Adrenal gland (tissue), 19 donors: ENCODE measurements at regions of chr13 and their contacts with region 1.

Region 1: GRCh38 chr13:44465318-44465717 is 91.7 kb downstream of the SERP2 start:
- DNase-seq: no peak
- H3K4me3 ChIP-seq: no peak overlapping the region
- H3K27ac ChIP-seq: no peak overlapping the region
- H3K4me1 ChIP-seq: no peaks in the 10 kb centered on the region
- H3K27me3 ChIP-seq: no peaks in the 10 kb centered on the region
- CTCF ChIP-seq: no peak
- POLR2A ChIP-seq: no peak

Region 2: DNA sequence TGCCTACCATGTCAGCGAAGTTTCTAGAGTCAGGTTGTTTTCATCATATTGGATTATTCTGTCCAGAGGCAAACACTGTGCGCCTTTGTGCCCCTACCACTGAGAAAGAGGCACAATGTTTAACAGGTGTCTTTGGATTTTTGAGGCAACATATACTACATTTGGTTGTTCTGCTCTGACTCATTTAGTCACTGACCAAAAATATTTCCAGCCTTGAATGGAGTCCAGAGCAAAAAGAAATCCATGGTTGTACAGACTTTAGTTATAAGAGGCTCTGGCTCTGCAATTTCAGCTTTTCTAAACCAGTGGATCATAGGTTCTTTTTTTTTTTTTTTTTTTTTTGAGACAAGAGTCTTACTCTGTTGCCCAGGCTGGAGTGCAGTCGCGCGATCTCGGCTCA is 549.9 kb before region 1 on chr13:
- intact Hi-C with region 1: loop called in 1 of 2 experiments (anchors 10 kb)
- DNase-seq: no peak
- H3K4me3 ChIP-seq: no peak overlapping the region
- H3K27ac ChIP-seq: no peak overlapping the region
- H3K4me1 ChIP-seq: no peaks in the 10 kb centered on the region
- H3K27me3 ChIP-seq: no peaks in the 10 kb centered on the region
- CTCF ChIP-seq: no peak
- POLR2A ChIP-seq: no peak

Region 3: DNA sequence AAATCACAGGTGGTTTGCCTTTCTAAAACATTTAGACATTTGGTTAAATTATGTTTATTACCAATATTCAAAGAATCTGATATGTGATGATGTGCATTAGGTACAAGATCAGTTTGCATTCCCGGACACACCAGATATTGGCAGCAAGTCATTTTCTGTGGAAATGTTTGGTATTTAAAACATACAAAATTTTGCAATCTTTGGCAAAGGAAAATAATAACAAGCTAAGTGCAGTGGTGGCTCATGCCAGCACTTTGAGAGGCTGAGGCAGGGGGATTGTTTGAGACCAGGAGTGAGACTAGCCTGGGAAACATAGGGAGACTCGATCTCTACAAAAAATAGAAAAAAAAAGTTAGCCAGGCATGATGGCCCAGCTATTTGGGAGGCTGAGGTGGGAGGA is 140.0 kb after region 1 on chr13:
- intact Hi-C with region 1: no loop called
- DNase-seq: no peak
- H3K4me3 ChIP-seq: no peak overlapping the region
- H3K27ac ChIP-seq: no peak overlapping the region
- H3K4me1 ChIP-seq: no peaks in the 10 kb centered on the region
- H3K27me3 ChIP-seq: no peaks in the 10 kb centered on the region
- CTCF ChIP-seq: no peak
- POLR2A ChIP-seq: no peak